Naive thymus-derived CD4-positive, alpha-beta T cell (primary cell): ENCODE measurements at regions of chr2 and their contacts with region 1.

Region 1: GRCh38 chr2:147989809-147990403 is 30.6 kb downstream of the ORC4 start:
- DNase-seq: peak in 7 of 9 donors; percentile 37 to 70 (median 52)
- ATAC-seq: peak; percentile 87
- H3K4me3 ChIP-seq: no peak overlapping the region
- H3K4me3 Mint-ChIP-seq: no peak overlapping the region
- H3K27ac ChIP-seq: no peak overlapping the region
- H3K27ac Mint-ChIP-seq: peak overlapping the region in 7 of 9 donors; percentile 11 to 84 (median 28)
- H3K4me1 ChIP-seq: no peaks in the 10 kb centered on the region
- H3K4me1 Mint-ChIP-seq: peaks cover 6 to 50% (median 42%) of the 10 kb centered on the region in 7 donors
- H3K27me3 ChIP-seq: no peaks in the 10 kb centered on the region
- H3K27me3 Mint-ChIP-seq: no peaks in the 10 kb centered on the region

Region 2: DNA sequence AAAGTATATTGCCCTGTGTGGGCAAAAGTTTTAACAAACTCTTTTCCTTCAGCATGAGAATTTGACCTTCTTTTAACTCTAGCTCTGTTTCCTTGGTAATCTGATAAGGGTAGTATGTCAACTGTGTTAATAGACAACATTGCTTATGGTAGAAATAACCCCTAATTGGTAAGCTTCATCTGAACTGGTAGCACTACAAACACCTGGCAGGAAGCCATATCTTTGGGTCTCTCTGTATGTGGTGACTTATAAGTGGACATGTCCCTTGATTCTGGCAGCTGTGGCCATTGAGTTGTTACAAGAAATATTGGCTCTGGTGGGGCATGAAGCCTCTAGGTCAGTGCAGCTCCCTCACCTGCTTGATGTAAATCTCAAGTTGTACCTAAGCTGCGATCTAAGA is 77.9 kb after region 1 on chr2:
- CTCF ChIA-PET with region 1: no interaction called
- POLR2A ChIA-PET with region 1: no interaction called
- intact Hi-C with region 1: loop called in 1 of 2 experiments (anchors 5 kb)
- DNase-seq: no peak
- ATAC-seq: no peak
- H3K4me3 ChIP-seq: no peak overlapping the region
- H3K4me3 Mint-ChIP-seq: no peak overlapping the region
- H3K27ac ChIP-seq: no peak overlapping the region
- H3K27ac Mint-ChIP-seq: no peak overlapping the region
- H3K4me1 ChIP-seq: no peaks in the 10 kb centered on the region
- H3K4me1 Mint-ChIP-seq: peaks cover 0 to 30% (median 7%) of the 10 kb centered on the region in 7 donors
- H3K27me3 ChIP-seq: no peaks in the 10 kb centered on the region
- H3K27me3 Mint-ChIP-seq: no peaks in the 10 kb centered on the region

Region 3: GRCh38 chr2:148298196-148298595 is 308.3 kb after region 1 on chr2:
- CTCF ChIA-PET with region 1: no interaction called
- POLR2A ChIA-PET with region 1: no interaction called
- intact Hi-C with region 1: loop called in 1 of 2 experiments (anchors 10 kb)
- DNase-seq: no peak
- ATAC-seq: no peak
- H3K4me3 ChIP-seq: no peak overlapping the region
- H3K4me3 Mint-ChIP-seq: no peak overlapping the region
- H3K27ac ChIP-seq: no peak overlapping the region
- H3K27ac Mint-ChIP-seq: no peak overlapping the region
- H3K4me1 ChIP-seq: no peaks in the 10 kb centered on the region
- H3K4me1 Mint-ChIP-seq: peaks cover 0 to 11% (median 0%) of the 10 kb centered on the region in 7 donors
- H3K27me3 ChIP-seq: no peaks in the 10 kb centered on the region
- H3K27me3 Mint-ChIP-seq: no peaks in the 10 kb centered on the region

Region 4: GRCh38 chr2:148926291-148926961 is 936.5 kb after region 1 on chr2:
- CTCF ChIA-PET with region 1: no interaction called
- POLR2A ChIA-PET with region 1: no interaction called
- intact Hi-C with region 1: no loop called
- DNase-seq: peak; percentile 21 to 60 (median 48)
- ATAC-seq: peak; percentile 89
- H3K4me3 ChIP-seq: peak overlapping the region; percentile 43
- H3K4me3 Mint-ChIP-seq: peak overlapping the region; percentile 77 to 88 (median 84)
- H3K27ac ChIP-seq: no peak overlapping the region
- H3K27ac Mint-ChIP-seq: peak overlapping the region; percentile 29 to 94 (median 83)
- H3K4me1 ChIP-seq: peaks cover 0 to 7% of the 10 kb centered on the region in 2 donors
- H3K4me1 Mint-ChIP-seq: peaks cover 9 to 29% (median 22%) of the 10 kb centered on the region in 7 donors
- H3K27me3 ChIP-seq: no peaks in the 10 kb centered on the region
- H3K27me3 Mint-ChIP-seq: no peaks in the 10 kb centered on the region

Region 5: GRCh38 chr2:148989882-148990493 is 1000.1 kb after region 1 on chr2:
- CTCF ChIA-PET with region 1: interaction called, 16 read pairs
- POLR2A ChIA-PET with region 1: no interaction called
- intact Hi-C with region 1: loop called (anchors 1 kb)
- DNase-seq: peak in 8 of 9 donors; percentile 28 to 65 (median 56)
- ATAC-seq: peak; percentile 86
- H3K4me3 ChIP-seq: no peak overlapping the region
- H3K4me3 Mint-ChIP-seq: no peak overlapping the region
- H3K27ac ChIP-seq: no peak overlapping the region
- H3K27ac Mint-ChIP-seq: no peak overlapping the region
- H3K4me1 ChIP-seq: no peaks in the 10 kb centered on the region
- H3K4me1 Mint-ChIP-seq: peaks cover 0 to 4% (median 4%) of the 10 kb centered on the region in 7 donors
- H3K27me3 ChIP-seq: no peaks in the 10 kb centered on the region
- H3K27me3 Mint-ChIP-seq: no peaks in the 10 kb centered on the region